B cell (primary cell): ENCODE measurements at regions of chr1 and their contacts with region 1.

Region 1: DNA sequence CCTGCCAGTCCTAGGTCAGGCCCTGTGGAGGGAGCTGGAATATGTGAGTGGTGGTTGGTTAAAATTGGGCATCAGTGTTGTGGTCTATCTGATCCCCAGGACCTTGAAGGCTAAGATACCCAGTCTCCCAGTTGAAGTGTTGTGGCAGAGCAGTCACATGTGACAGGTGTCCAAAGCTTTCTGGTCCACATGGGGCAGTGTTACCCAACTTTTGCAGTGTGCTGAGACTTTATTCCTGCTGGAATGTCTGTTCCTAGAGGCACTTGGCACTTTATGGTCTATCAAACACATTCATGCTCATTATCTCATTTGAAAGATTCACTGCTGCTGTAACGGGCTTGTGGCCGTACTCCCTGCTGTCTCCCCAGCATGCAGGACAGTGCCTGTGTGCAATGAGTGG is 21.0 kb upstream of the LORICRIN start:
- DNase-seq: no peak
- ATAC-seq: no peak
- H3K4me3 ChIP-seq: no peak overlapping the region
- H3K4me3 Mint-ChIP-seq: no peak overlapping the region
- H3K27ac ChIP-seq: no peak overlapping the region
- H3K27ac Mint-ChIP-seq: no peak overlapping the region
- H3K4me1 ChIP-seq: no peaks in the 10 kb centered on the region
- H3K4me1 Mint-ChIP-seq: no peaks in the 10 kb centered on the region
- H3K27me3 ChIP-seq: peaks cover 0 to 5% (median 0%) of the 10 kb centered on the region in 4 experiments
- H3K27me3 Mint-ChIP-seq: peaks cover 26% of the 10 kb centered on the region
- CTCF ChIP-seq: no peak

Region 2: DNA sequence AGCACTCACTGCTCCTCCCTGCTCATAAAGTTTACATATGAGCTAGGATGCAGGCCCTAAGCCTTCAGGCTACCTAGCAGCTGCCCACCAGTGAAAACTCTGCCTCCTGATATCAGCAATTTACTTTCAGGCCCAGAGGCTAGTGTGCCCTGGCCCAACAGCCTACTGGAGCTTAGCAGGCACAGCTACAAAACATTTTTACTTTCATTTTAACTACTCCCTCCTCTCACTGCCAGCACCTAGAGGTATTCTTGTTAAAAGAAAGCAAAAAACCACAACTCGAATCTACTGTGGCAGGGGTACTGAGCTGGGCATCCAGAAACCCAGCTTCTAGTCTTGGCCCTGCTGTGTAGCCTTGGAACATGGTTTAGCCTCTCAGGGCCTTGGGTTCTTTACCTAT is 15.2 kb after region 1 on chr1:
- CTCF ChIA-PET with region 1: no interaction called
- POLR2A ChIA-PET with region 1: no interaction called
- intact Hi-C with region 1: no loop called
- DNase-seq: no peak
- ATAC-seq: no peak
- H3K4me3 ChIP-seq: no peak overlapping the region
- H3K4me3 Mint-ChIP-seq: no peak overlapping the region
- H3K27ac ChIP-seq: no peak overlapping the region
- H3K27ac Mint-ChIP-seq: no peak overlapping the region
- H3K4me1 ChIP-seq: no peaks in the 10 kb centered on the region
- H3K4me1 Mint-ChIP-seq: no peaks in the 10 kb centered on the region
- H3K27me3 ChIP-seq: peaks cover 0 to 10% (median 5%) of the 10 kb centered on the region in 4 experiments
- H3K27me3 Mint-ChIP-seq: peaks cover 25% of the 10 kb centered on the region
- CTCF ChIP-seq: no peak

Region 3: DNA sequence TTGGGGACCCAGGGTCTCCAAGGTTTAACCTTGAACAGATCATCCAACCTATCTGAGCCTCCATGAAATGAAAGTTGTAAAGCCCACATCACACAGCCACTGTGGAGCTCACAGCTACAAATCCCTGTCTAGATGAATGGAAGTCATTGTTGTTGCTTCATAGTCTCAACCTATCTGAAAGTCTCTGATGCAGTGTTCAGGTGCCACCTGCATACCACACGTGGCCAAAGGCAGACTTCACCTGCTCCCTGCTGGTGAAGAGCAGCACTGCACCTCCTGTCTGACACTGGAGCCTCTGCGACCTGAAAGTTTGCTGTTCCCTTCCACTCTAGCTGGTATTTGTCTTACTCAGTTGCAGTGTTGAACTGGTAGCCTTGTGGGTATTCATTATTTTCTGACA is 39.3 kb after region 1 on chr1:
- CTCF ChIA-PET with region 1: interaction called, 3 read pairs
- POLR2A ChIA-PET with region 1: no interaction called
- intact Hi-C with region 1: loop called (anchors 2 kb)
- DNase-seq: peak; percentile 58
- ATAC-seq: peak; percentile 77
- H3K4me3 ChIP-seq: no peak overlapping the region
- H3K4me3 Mint-ChIP-seq: no peak overlapping the region
- H3K27ac ChIP-seq: no peak overlapping the region
- H3K27ac Mint-ChIP-seq: no peak overlapping the region
- H3K4me1 ChIP-seq: no peaks in the 10 kb centered on the region
- H3K4me1 Mint-ChIP-seq: no peaks in the 10 kb centered on the region
- H3K27me3 ChIP-seq: peaks cover 0 to 6% (median 3%) of the 10 kb centered on the region in 4 experiments
- H3K27me3 Mint-ChIP-seq: peaks cover 40% of the 10 kb centered on the region
- CTCF ChIP-seq: peak; percentile 64